ENCODE measurements at regions of chr16 and their contacts with region 1.

Region 1: GRCh38 chr16:66275775-66276428 is 90.6 kb upstream of the CDH5 start:
- DNase-seq: peak; percentile 37
- H3K4me3 Mint-ChIP-seq: no peak overlapping the region
- H3K27ac Mint-ChIP-seq: no peak overlapping the region
- H3K4me1 Mint-ChIP-seq: peaks cover 2% of the 10 kb centered on the region
- H3K27me3 Mint-ChIP-seq: peaks cover 6% of the 10 kb centered on the region

Region 2: GRCh38 chr16:66315210-66315825 is 39.4 kb after region 1 on chr16:
- CTCF ChIA-PET with region 1: interaction called, 16 read pairs
- intact Hi-C with region 1: loop called (anchors 1 kb)
- DNase-seq: peak; percentile 68
- H3K4me3 Mint-ChIP-seq: no peak overlapping the region
- H3K27ac Mint-ChIP-seq: no peak overlapping the region
- H3K4me1 Mint-ChIP-seq: no peaks in the 10 kb centered on the region
- H3K27me3 Mint-ChIP-seq: no peaks in the 10 kb centered on the region

Region 3: DNA sequence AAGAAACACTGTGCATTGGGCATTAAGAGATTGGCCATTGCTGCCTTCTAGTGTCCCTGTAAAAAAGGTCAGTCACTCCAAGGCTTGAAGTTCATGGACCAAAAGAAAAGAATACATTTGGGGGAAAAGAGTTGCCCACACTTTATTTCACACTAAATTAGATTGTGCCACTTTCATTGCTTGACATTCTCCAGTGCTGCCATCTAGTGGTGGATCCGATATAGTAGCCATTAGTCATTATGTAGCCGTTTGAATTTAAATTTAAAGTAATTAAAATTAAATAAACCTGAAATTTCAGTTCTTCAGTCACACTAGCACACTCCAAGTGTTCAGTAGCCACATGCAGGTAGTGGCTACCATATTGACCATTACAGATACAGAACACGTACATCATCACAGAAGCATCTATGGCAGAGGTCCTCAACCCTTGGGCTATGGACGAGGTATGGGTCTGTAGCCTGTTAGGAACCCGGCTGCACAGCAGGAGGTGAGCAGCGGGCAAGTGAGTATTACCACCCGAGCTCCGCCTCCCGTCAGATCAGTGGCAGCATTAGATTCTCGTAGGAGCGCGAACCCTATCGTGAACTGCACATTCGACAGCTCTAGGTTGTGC is 68.7 kb after region 1 on chr16:
- CTCF ChIA-PET with region 1: interaction called, 3 read pairs
- intact Hi-C with region 1: loop called (anchors 1 kb)
- DNase-seq: peak; percentile 62
- H3K4me3 Mint-ChIP-seq: no peak overlapping the region
- H3K27ac Mint-ChIP-seq: no peak overlapping the region
- H3K4me1 Mint-ChIP-seq: no peaks in the 10 kb centered on the region
- H3K27me3 Mint-ChIP-seq: peaks cover 31% of the 10 kb centered on the region